Posterior vena cava (tissue), 2 donors: ENCODE measurements at regions of chr10 and their contacts with region 1.

Region 1: GRCh38 chr10:131899695-131900349 is 986 bp upstream of the PPP2R2D start:
- DNase-seq: peak; percentile 45

Region 2: GRCh38 chr10:131911451-131911850 is 11.6 kb after region 1 on chr10:
- intact Hi-C with region 1: loop called in 1 of 2 experiments (anchors 1 kb)
- DNase-seq: no peak

Region 3: GRCh38 chr10:132001238-132001972 is 101.6 kb after region 1 on chr10:
- intact Hi-C with region 1: loop called in 1 of 2 experiments (anchors 10 kb)
- DNase-seq: no peak

Region 4: GRCh38 chr10:132307823-132308587 is 408.2 kb after region 1 on chr10 and contains the start of gene STK32C:
- intact Hi-C with region 1: no loop called
- DNase-seq: peak; percentile 97
- total RNA-seq, gene STK32C: 6.3 to 9.7 TPM